ENCODE measurements at regions of chr17 and their contacts with region 1.

Region 1: DNA sequence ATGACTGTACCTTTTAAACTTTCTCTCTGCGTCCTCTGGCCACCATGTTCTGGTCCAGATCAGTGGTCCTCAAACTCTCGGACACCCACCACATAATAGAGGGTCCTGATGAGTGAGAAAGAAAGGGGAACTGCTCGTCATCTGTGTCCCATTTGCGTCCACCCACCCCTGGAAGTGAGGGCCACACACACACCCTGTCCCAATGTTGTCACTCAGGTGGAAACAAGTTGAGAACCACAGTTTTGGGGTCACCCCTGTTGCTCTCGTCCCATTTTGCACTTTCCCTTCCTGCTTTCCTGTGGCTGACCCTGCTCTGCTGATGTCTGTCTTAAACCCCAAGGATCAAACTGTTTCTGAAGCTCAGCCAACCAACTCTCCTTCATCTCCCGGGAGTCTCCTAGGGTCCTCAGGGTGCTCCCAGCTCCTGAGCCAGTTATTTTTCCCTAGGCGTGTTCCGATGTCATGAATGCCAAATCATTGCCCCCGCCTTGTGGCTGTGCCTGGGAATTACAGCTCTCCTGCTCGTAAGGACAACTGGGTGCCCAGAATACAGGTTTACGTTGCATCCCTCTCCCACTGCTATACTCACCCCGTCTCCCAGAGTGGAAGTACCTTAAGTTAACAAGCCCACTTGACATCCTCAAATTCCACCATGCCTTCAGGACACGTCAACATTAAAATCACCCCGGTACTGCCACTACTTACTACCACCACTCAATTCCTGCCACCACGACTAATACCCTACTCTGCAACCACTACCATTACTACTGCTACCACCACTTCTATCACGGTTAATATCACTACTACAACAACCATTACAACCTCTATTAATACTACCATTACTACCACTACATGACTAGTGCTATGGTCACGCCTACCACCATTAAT is 26.0 kb upstream of the HNF1B start:
- DNase-seq: peak; percentile 98
- H3K4me3 Mint-ChIP-seq: no peak overlapping the region
- H3K27ac Mint-ChIP-seq: peak overlapping the region; percentile 3
- H3K4me1 Mint-ChIP-seq: peaks cover 26% of the 10 kb centered on the region
- H3K27me3 Mint-ChIP-seq: no peaks in the 10 kb centered on the region
- CTCF ChIP-seq: peak; percentile 100

Region 2: DNA sequence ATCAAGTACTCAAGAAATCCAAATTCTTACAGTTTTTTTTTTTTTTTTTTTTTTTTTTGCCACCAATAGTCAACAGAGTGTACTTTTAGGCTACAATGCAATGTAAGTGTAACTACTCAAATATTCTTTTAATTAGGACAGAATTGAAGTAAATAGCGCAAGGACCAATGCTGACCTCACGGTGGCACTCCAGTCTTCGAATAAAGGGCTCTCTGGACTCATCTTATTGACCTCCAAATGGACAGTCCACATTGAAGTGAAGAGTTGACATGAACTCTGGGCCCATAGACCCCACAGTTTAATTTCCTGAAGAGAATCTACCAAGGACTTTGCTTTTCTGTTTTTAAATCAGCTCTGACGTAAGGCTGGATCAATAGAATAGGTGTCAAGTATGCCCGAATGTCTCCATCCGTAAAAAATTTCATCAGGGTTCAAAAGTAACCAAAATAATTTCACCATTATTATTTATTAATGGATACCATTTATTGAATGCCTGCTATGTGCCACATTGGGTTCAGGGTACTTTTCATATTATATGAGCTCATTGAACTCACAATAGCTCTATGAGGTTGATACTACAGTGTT is 120.4 kb before region 1 on chr17:
- CTCF ChIA-PET with region 1: interaction called, 75 read pairs
- intact Hi-C with region 1: loop called (anchors 1 kb)
- DNase-seq: peak; percentile 80
- H3K4me3 Mint-ChIP-seq: no peak overlapping the region
- H3K27ac Mint-ChIP-seq: no peak overlapping the region
- H3K4me1 Mint-ChIP-seq: peaks cover 17% of the 10 kb centered on the region
- H3K27me3 Mint-ChIP-seq: peaks cover 2% of the 10 kb centered on the region
- CTCF ChIP-seq: peak; percentile 85

Region 3: GRCh38 chr17:37710344-37710886 is 60.5 kb before region 1 on chr17:
- CTCF ChIA-PET with region 1: interaction called, 31 read pairs
- intact Hi-C with region 1: no loop called
- DNase-seq: peak; percentile 100
- H3K4me3 Mint-ChIP-seq: peak overlapping the region; percentile 63
- H3K27ac Mint-ChIP-seq: peak overlapping the region; percentile 97
- H3K4me1 Mint-ChIP-seq: peaks cover 100% of the 10 kb centered on the region
- H3K27me3 Mint-ChIP-seq: no peaks in the 10 kb centered on the region
- CTCF ChIP-seq: peak; percentile 89

Region 4: GRCh38 chr17:37744961-37745800 is 25.7 kb before region 1 on chr17 and contains the start of gene HNF1B:
- CTCF ChIA-PET with region 1: interaction called, 54 read pairs
- intact Hi-C with region 1: loop called (anchors 1 kb)
- DNase-seq: peak; percentile 97
- H3K4me3 Mint-ChIP-seq: peak within 1 kb of the TSS; percentile 100
- H3K27ac Mint-ChIP-seq: peak within 1 kb of the TSS; percentile 99
- H3K4me1 Mint-ChIP-seq: peaks cover 39% of the 10 kb centered on the region
- H3K27me3 Mint-ChIP-seq: no peaks in the 10 kb centered on the region
- CTCF ChIP-seq: peak; percentile 10
- total RNA-seq, gene HNF1B: 127 and 130 TPM in 2 replicates

Region 5: DNA sequence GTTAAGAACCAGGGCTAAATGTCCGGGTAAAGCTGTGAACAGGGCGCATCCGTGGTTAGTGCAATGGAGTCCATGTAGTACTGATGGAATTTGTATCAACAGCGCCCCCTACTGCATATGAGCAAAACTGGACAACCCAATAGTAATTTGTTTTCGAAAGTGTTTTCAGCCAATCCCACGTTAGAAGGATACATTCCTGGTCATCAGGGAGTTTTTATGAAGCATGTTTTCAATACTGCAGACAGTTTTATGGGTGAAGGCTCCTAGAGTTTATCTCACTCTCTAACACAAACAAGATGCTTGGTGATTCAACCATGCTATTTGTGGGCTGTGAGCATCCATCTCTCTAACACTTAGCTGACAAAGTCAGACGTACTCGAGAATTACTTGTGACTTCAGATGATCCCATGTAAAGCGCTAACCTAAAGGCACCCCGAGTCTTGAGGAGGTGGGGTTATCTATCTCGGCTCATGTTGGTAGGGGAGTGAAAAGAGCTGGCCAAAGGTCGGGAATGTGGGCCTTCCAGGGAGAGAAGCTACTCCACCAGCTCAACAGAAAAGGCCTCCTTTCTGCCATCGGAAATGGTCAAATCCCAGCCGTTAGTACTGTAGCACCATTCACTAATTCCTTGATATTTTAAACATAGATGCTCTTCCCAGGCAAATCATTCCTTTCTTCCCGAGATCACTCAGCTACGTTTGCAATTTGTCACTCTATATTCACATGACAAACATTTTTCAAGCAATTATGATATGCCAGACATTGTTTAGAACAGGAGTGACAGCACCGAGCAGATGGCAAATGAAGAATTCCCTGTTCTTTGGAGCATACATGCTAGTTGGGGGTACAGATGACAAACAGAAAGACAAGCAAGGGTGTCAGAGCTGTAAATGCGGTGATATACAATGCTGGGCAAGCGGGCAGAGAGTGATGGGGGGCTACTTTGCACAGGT is 20.8 kb after region 1 on chr17:
- CTCF ChIA-PET with region 1: interaction called, 14 read pairs
- intact Hi-C with region 1: no loop called
- DNase-seq: peak; percentile 71
- H3K4me3 Mint-ChIP-seq: no peak overlapping the region
- H3K27ac Mint-ChIP-seq: no peak overlapping the region
- H3K4me1 Mint-ChIP-seq: peaks cover 19% of the 10 kb centered on the region
- H3K27me3 Mint-ChIP-seq: peaks cover 45% of the 10 kb centered on the region
- CTCF ChIP-seq: peak; percentile 98

Measured in Calu3 (cell line).